ENCODE measurements at regions of chr5 and their contacts with region 1.

Region 1: GRCh38 chr5:102715082-102715819 is 39.9 kb upstream of the PAM start:
- DNase-seq: peak; percentile 84
- H3K4me3 ChIP-seq: no peak overlapping the region
- H3K27ac ChIP-seq: peak overlapping the region; percentile 44
- H3K4me1 ChIP-seq: peaks cover 46% of the 10 kb centered on the region
- H3K27me3 ChIP-seq: no peaks in the 10 kb centered on the region
- CTCF ChIP-seq: no peak

Region 2: DNA sequence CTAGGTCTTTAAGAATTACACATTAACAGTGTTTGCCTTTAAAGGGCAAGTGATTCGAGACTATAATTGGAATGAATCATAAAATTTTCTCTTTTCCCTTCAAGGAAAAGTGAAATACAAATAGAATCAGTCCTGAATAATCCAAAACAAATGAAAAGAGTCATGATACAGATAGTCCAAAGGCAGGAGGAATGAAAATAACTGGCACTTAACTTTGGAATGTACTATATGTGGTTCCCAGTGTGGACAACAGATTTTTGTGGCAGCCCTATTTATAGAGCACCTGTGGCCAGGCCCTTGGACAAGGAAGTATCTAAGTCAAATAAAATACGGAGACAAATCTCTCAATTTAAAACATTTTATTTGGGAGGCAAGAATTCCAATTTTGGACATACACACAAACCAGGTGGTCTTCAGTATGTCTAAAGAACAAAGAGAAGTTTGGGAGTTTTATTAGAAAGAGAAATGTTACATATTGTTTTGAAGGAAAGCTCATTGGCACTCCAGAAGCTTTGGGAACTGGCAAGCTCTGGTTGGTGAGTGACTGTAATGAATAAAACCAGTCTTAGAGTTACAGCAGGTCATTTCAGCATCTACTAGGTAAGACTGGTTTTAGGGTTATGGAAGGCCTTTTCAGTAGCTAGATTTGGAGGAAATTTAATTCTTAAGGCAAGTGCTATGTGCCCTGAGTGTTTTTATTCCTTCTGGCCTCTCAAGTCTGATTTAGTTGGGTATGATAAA is 76.2 kb before region 1 on chr5:
- CTCF ChIA-PET with region 1: no interaction called
- dilution Hi-C with region 1: loop called (anchors 5 kb)
- in situ Hi-C with region 1: no loop called
- intact Hi-C with region 1: no loop called
- DNase-seq: no peak
- H3K4me3 ChIP-seq: no peak overlapping the region
- H3K27ac ChIP-seq: no peak overlapping the region
- H3K4me1 ChIP-seq: no peaks in the 10 kb centered on the region
- H3K27me3 ChIP-seq: peaks cover 3% of the 10 kb centered on the region
- CTCF ChIP-seq: no peak

Region 3: DNA sequence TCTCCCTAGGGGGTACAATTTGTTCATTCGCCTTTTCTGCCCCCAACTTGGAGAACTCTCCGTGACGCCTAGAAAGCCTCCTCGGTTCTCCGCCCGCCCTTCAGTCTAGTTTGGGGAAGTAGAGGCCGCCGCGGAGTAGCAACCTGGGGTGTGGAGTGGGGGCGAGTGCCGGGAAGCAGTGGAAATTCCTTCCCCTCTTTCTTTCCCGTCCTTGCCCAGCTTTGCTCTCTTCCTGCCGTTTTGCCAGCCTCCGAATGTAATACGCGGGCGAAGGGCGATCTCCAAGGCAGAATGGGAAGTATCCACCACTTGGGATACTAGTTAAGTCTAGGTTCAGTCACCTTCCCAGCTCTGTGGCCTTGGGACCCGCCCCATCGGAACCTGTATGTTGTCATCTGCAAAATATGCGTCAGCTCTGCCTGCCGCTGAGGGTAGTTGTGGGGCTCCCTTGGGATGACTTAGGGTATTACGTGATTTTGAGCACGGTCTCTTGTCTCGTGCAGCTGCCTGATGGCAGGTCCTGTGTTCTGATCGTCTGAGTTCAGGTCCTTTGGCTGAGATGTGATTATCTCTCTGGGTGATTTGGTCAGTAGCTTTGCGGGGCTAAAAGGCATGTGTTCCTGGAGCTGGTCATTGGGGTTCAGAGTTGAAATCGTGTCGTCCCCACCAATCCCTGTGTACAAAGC is 40.6 kb after region 1 on chr5:
- CTCF ChIA-PET with region 1: no interaction called
- dilution Hi-C with region 1: no loop called
- in situ Hi-C with region 1: no loop called
- intact Hi-C with region 1: loop called (anchors 2 kb)
- DNase-seq: peak; percentile 89
- H3K4me3 ChIP-seq: peak overlapping the region; percentile 79 to 88 (median 85)
- H3K27ac ChIP-seq: peak overlapping the region; percentile 92
- H3K4me1 ChIP-seq: peaks cover 27% of the 10 kb centered on the region
- H3K27me3 ChIP-seq: no peaks in the 10 kb centered on the region
- CTCF ChIP-seq: peak in 1 of 2 donors; percentile 16

Region 4: DNA sequence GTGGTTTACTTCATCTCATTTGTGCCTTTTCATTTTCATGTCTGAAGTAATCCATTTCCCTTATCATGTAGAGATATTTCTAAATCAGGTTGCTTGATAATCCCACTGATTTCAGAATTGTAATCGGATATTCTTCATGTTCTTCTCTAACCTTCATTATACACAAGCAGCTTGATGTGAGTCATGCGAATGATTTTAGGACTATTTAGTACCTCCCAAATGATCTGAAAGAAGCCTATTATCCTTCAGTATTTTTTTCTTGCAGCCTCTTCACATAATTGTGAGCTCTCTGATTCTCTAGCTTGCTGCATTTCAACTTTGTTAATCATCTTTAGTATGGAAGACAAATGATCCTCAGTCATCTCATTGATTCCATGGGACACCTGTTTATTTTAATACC is 222.7 kb after region 1 on chr5:
- CTCF ChIA-PET with region 1: no interaction called
- dilution Hi-C with region 1: no loop called
- in situ Hi-C with region 1: no loop called
- intact Hi-C with region 1: no loop called
- DNase-seq: peak; percentile 9
- H3K4me3 ChIP-seq: no peak overlapping the region
- H3K27ac ChIP-seq: no peak overlapping the region
- H3K4me1 ChIP-seq: no peaks in the 10 kb centered on the region
- H3K27me3 ChIP-seq: no peaks in the 10 kb centered on the region
- CTCF ChIP-seq: no peak